ENCODE measurements at regions of chr11 and their contacts with region 1.

Region 1: DNA sequence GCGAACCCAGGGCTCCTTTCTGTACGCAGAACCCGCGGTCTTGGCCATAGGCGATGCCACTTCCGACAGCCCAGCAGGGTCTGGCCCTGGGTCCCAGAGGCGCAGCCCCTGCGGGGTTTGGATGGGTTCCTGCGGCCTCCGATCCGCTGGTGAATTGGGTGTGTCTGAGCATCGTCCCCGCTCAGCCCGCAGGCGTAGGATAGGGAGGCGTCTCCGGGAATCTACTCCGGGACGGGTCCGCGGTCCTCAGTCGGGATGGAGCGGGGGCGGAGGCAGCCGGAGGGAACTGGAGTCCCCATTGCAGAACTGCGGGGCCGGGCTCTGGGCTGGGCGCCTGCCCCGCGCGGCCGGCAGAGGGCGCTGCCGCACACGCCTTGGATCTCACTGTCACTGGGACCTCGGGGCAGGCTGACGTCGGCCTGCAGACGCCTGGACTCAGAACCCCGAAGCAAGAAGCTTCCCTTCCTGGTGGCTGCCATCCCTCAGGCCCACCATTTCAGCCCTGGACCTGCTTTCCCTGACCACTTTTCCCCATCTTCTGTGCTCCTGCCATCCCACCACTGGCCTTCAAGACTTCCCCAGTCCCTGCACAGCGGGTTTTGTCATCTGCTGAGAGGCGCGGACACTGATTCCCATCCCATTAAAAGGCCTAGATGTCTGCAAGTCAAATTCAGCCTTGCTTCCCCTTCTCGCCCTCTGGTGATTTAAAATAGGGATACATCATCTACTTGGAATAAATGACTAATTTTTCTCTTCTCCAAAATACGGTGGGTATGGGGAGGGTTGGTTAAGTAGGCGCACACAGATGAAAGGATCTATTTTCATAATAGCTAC is 38.3 kb upstream of the CREB3L1 start:
- DNase-seq: peak; percentile 53 to 91 (median 78)
- ATAC-seq: peak; percentile 80
- H3K4me3 ChIP-seq: peak overlapping the region; percentile 41
- H3K4me3 Mint-ChIP-seq: peak overlapping the region; percentile 65
- H3K27ac ChIP-seq: no peak overlapping the region
- H3K27ac Mint-ChIP-seq: no peak overlapping the region
- H3K4me1 ChIP-seq: peaks cover 38% of the 10 kb centered on the region
- H3K4me1 Mint-ChIP-seq: peaks cover 15% of the 10 kb centered on the region
- H3K27me3 ChIP-seq: peaks cover 14 to 15% of the 10 kb centered on the region in 2 experiments
- H3K27me3 Mint-ChIP-seq: peaks cover 49% of the 10 kb centered on the region
- CTCF ChIP-seq: peak; percentile 97

Region 2: DNA sequence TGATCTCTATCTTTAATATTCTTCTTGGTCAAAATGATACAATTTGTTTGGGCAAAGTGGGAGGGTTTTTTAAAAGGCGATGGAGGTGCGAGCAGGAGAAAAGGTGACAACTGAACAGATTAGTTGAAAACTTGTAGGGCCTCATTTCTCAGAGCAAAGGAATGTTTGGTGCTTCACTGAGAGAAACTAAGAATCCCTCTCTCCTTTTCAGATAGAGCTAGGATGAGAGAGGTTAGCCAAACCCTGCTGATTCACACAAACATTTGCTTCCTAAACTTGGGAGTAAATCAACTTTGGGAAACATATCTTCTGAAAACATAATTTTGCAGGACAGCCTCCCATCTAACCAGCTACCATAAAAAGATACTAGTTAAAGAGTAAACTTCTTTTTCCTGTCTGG is 175.0 kb before region 1 on chr11:
- CTCF ChIA-PET with region 1: no interaction called
- POLR2A ChIA-PET with region 1: no interaction called
- intact Hi-C with region 1: no loop called
- DNase-seq: no peak
- ATAC-seq: no peak
- H3K4me3 ChIP-seq: no peak overlapping the region
- H3K4me3 Mint-ChIP-seq: no peak overlapping the region
- H3K27ac ChIP-seq: no peak overlapping the region
- H3K27ac Mint-ChIP-seq: no peak overlapping the region
- H3K4me1 ChIP-seq: no peaks in the 10 kb centered on the region
- H3K4me1 Mint-ChIP-seq: peaks cover 21% of the 10 kb centered on the region
- H3K27me3 ChIP-seq: no peaks in the 10 kb centered on the region
- H3K27me3 Mint-ChIP-seq: no peaks in the 10 kb centered on the region
- CTCF ChIP-seq: no peak

Region 3: DNA sequence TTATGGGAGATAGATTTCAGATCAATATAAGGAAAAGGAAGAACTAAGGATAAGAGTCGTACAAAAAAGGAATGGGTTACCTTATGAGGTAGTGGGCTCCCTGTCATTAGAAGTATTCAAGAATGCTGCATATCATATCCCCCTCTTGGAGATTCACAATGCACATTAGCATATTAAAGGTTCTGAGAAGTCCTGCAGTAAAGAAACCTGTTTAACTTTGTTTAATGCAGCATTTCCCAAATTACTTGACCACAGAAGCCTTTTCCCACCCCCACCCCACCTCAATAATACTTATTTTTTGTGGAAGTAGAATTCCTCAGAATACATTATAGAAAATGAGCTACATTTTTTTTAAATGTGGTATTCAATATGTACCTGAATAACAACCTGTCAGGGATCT is 148.8 kb before region 1 on chr11:
- CTCF ChIA-PET with region 1: no interaction called
- POLR2A ChIA-PET with region 1: no interaction called
- intact Hi-C with region 1: no loop called
- DNase-seq: no peak
- ATAC-seq: no peak
- H3K4me3 ChIP-seq: no peak overlapping the region
- H3K4me3 Mint-ChIP-seq: no peak overlapping the region
- H3K27ac ChIP-seq: no peak overlapping the region
- H3K27ac Mint-ChIP-seq: no peak overlapping the region
- H3K4me1 ChIP-seq: no peaks in the 10 kb centered on the region
- H3K4me1 Mint-ChIP-seq: no peaks in the 10 kb centered on the region
- H3K27me3 ChIP-seq: no peaks in the 10 kb centered on the region
- H3K27me3 Mint-ChIP-seq: no peaks in the 10 kb centered on the region
- CTCF ChIP-seq: no peak

Region 4: DNA sequence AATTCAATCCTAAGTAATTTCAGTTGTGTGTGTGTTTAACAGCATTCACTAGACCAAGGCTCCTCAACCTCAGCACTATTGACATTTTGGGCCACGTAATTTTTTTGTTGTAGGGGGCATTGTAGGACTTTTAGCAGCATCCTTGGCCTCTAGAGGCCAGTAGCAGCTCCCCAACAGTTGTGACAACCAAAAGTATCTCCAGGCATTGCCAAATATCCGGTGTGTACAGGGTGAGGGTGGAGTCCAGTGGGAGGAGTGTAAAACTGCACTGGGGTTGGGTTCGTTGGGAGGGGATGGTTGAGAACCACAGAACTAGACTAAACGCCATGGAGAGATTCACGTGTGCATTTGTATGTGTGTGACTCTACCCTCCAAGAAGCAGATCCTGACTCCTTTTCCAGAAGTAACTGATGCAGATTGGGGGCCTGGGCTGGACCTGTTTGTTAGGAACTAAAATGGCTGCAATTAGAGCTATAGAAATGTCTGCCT is 112.0 kb before region 1 on chr11:
- CTCF ChIA-PET with region 1: no interaction called
- POLR2A ChIA-PET with region 1: no interaction called
- intact Hi-C with region 1: loop called (anchors 5 to 10 kb)
- DNase-seq: peak; percentile 16 to 88 (median 41)
- ATAC-seq: peak; percentile 99
- H3K4me3 ChIP-seq: no peak overlapping the region
- H3K4me3 Mint-ChIP-seq: peak overlapping the region; percentile 2
- H3K27ac ChIP-seq: no peak overlapping the region
- H3K27ac Mint-ChIP-seq: peak overlapping the region; percentile 43
- H3K4me1 ChIP-seq: peaks cover 12% of the 10 kb centered on the region
- H3K4me1 Mint-ChIP-seq: peaks cover 16% of the 10 kb centered on the region
- H3K27me3 ChIP-seq: no peaks in the 10 kb centered on the region
- H3K27me3 Mint-ChIP-seq: no peaks in the 10 kb centered on the region
- CTCF ChIP-seq: peak; percentile 22

Region 5: GRCh38 chr11:46332568-46333393 is 93.6 kb after region 1 on chr11:
- CTCF ChIA-PET with region 1: interaction called, 10 read pairs
- POLR2A ChIA-PET with region 1: interaction called, 7 read pairs
- intact Hi-C with region 1: no loop called
- DNase-seq: peak in 10 of 14 experiments; percentile 30 to 71 (median 54)
- ATAC-seq: peak; percentile 6
- H3K4me3 ChIP-seq: peak overlapping the region; percentile 71
- H3K4me3 Mint-ChIP-seq: peak overlapping the region; percentile 94
- H3K27ac ChIP-seq: peak overlapping the region in 1 of 2 donors; percentile 73
- H3K27ac Mint-ChIP-seq: peak overlapping the region; percentile 91
- H3K4me1 ChIP-seq: peaks cover 80% of the 10 kb centered on the region
- H3K4me1 Mint-ChIP-seq: peaks cover 76% of the 10 kb centered on the region
- H3K27me3 ChIP-seq: peaks cover 0 to 5% of the 10 kb centered on the region in 2 experiments
- H3K27me3 Mint-ChIP-seq: no peaks in the 10 kb centered on the region
- CTCF ChIP-seq: no peak

Region 6: GRCh38 chr11:46367244-46367915 is 128.2 kb after region 1 on chr11:
- CTCF ChIA-PET with region 1: interaction called, 3 read pairs
- POLR2A ChIA-PET with region 1: interaction called, 3 read pairs
- intact Hi-C with region 1: loop called (anchors 2 to 5 kb)
- DNase-seq: peak; percentile 62 to 88 (median 74)
- ATAC-seq: peak; percentile 88
- H3K4me3 ChIP-seq: no peak overlapping the region
- H3K4me3 Mint-ChIP-seq: no peak overlapping the region
- H3K27ac ChIP-seq: no peak overlapping the region
- H3K27ac Mint-ChIP-seq: peak overlapping the region; percentile 49
- H3K4me1 ChIP-seq: peaks cover 61% of the 10 kb centered on the region
- H3K4me1 Mint-ChIP-seq: peaks cover 55% of the 10 kb centered on the region
- H3K27me3 ChIP-seq: no peaks in the 10 kb centered on the region
- H3K27me3 Mint-ChIP-seq: no peaks in the 10 kb centered on the region
- CTCF ChIP-seq: peak; percentile 97

Region 7: DNA sequence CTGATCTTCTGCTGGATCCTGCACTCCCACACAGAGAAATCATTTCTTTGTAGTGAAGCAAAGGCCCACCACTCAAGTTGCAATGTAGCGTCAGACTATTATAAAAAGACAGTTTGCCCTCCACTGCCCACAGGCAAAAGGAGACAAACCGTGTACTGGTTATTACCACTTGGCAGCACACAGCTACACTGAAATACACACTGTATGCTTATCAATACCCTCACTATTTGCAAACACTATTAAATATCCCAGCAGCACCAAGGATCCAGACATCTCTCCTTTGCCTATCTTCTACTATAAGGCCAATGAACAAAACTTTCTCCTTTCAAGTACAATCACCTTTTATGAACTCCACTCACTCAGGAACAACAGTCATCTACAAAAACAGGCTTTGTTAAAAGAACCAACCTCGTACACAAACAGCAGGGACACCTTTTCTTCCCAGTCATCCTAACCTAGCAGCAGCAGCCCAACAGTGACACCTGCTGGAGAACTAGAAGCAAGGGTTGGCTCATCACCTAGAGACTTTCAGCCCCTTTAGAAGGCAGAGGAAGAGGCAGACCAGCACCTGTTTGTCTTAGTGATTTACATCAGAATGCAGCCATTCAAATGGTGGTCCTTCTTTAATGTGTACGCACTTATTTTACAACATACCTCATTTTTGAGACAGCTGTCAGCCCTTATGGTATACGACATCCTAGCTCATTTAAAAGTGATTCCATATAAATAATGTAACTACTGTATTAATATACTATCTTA is 298.5 kb after region 1 on chr11:
- CTCF ChIA-PET with region 1: no interaction called
- POLR2A ChIA-PET with region 1: no interaction called
- intact Hi-C with region 1: loop called in 1 of 2 experiments (anchors 2 kb)
- DNase-seq: peak; percentile 30 to 82 (median 48)
- ATAC-seq: peak; percentile 96
- H3K4me3 ChIP-seq: no peak overlapping the region
- H3K4me3 Mint-ChIP-seq: no peak overlapping the region
- H3K27ac ChIP-seq: no peak overlapping the region
- H3K27ac Mint-ChIP-seq: peak overlapping the region; percentile 1
- H3K4me1 ChIP-seq: peaks cover 3% of the 10 kb centered on the region
- H3K4me1 Mint-ChIP-seq: peaks cover 36% of the 10 kb centered on the region
- H3K27me3 ChIP-seq: no peaks in the 10 kb centered on the region
- H3K27me3 Mint-ChIP-seq: no peaks in the 10 kb centered on the region
- CTCF ChIP-seq: peak; percentile 96

Measured in CD4-positive, alpha-beta T cell (primary cell).